GM12878 (cell line): ENCODE measurements at regions of chr2 and their contacts with region 1.

Region 1: GRCh38 chr2:172465417-172466334 is 38.3 kb downstream of the ITGA6 start:
- DNase-seq: no peak
- ATAC-seq: peak; percentile 65
- H3K4me3 ChIP-seq: no peak overlapping the region
- H3K27ac ChIP-seq: no peak overlapping the region
- H3K4me1 ChIP-seq: peaks cover 8% of the 10 kb centered on the region
- H3K27me3 ChIP-seq: peaks cover 0 to 5% of the 10 kb centered on the region in 2 experiments; a peak in 3 of 4 replicates
- CTCF ChIP-seq: peak; percentile 76 to 79 (median 76)
- EP300 ChIP-seq: no peak
- POLR2A ChIP-seq: no peak
- RAD21 ChIP-seq: peak; percentile 86

Region 2: DNA sequence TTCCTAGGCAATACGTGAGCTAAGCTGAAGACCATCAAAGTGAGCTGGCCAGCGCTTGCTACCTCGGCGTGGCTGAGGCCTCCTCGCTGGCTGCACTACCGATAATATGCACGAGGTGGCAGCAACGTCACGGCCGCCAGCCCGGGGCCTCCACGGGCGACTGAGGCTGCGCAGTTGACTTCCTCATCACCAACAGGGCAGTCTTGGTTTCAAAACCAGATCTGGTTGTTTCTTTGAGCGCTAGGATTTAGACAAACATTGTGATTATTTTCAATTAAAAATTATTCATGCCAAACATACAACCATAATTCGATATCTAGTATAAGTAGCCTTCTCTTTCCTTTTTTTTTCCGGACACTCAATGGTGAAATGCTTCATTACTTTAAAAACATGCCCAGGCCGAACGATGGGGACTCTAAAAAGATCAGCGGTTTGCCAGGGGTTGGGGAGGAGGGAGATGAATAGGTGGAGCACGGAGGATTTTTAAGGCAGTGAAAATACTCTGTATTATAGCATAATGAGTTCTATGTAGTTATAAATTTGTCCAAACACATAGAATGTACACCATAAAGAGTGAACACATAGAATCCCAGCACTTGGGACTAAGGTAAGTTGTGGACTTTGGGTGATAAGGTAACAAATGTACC is 891.4 kb before region 1 on chr2:
- CTCF ChIA-PET with region 1: interaction called, 11 read pairs
- POLR2A ChIA-PET with region 1: no interaction called
- RAD21 ChIA-PET with region 1: interaction called, 7 read pairs
- SMC1A ChIA-PET with region 1: interaction called, 4 read pairs
- in situ Hi-C with region 1: no loop called
- intact Hi-C with region 1: no loop called
- DNase-seq: peak; percentile 32
- ATAC-seq: peak; percentile 100
- H3K4me3 ChIP-seq: no peak overlapping the region
- H3K27ac ChIP-seq: no peak overlapping the region
- H3K4me1 ChIP-seq: no peaks in the 10 kb centered on the region
- H3K27me3 ChIP-seq: peaks cover 0 to 1% of the 10 kb centered on the region in 2 experiments; a peak in 1 of 4 replicates
- CTCF ChIP-seq: peak; percentile 94 to 97 (median 95); a peak in 5 of 6 replicates
- EP300 ChIP-seq: no peak
- POLR2A ChIP-seq: no peak
- RAD21 ChIP-seq: peak; percentile 81

Region 3: GRCh38 chr2:172131713-172132555 is 333.7 kb before region 1 on chr2:
- CTCF ChIA-PET with region 1: interaction called, 23 read pairs
- POLR2A ChIA-PET with region 1: no interaction called
- RAD21 ChIA-PET with region 1: interaction called, 4 read pairs
- SMC1A ChIA-PET with region 1: interaction called, 3 read pairs
- in situ Hi-C with region 1: no loop called
- intact Hi-C with region 1: loop called (anchors 5 kb)
- DNase-seq: no peak
- ATAC-seq: no peak
- H3K4me3 ChIP-seq: no peak overlapping the region
- H3K27ac ChIP-seq: no peak overlapping the region
- H3K4me1 ChIP-seq: no peaks in the 10 kb centered on the region
- H3K27me3 ChIP-seq: peaks cover 0 to 2% of the 10 kb centered on the region in 2 experiments; a peak in 2 of 4 replicates
- CTCF ChIP-seq: no peak
- EP300 ChIP-seq: no peak
- POLR2A ChIP-seq: no peak
- RAD21 ChIP-seq: no peak

Region 4: GRCh38 chr2:172200495-172201085 is 265.1 kb before region 1 on chr2:
- CTCF ChIA-PET with region 1: interaction called, 3 read pairs
- POLR2A ChIA-PET with region 1: no interaction called
- RAD21 ChIA-PET with region 1: no interaction called
- SMC1A ChIA-PET with region 1: no interaction called
- in situ Hi-C with region 1: no loop called
- intact Hi-C with region 1: loop called (anchors 1 kb)
- DNase-seq: no peak
- ATAC-seq: no peak
- H3K4me3 ChIP-seq: no peak overlapping the region
- H3K27ac ChIP-seq: no peak overlapping the region
- H3K4me1 ChIP-seq: no peaks in the 10 kb centered on the region
- H3K27me3 ChIP-seq: no peaks in the 10 kb centered on the region
- CTCF ChIP-seq: peak in 2 of 3 experiments; percentile 17 to 29; a peak in 2 of 6 replicates
- EP300 ChIP-seq: no peak
- POLR2A ChIP-seq: no peak
- RAD21 ChIP-seq: no peak

Region 5: DNA sequence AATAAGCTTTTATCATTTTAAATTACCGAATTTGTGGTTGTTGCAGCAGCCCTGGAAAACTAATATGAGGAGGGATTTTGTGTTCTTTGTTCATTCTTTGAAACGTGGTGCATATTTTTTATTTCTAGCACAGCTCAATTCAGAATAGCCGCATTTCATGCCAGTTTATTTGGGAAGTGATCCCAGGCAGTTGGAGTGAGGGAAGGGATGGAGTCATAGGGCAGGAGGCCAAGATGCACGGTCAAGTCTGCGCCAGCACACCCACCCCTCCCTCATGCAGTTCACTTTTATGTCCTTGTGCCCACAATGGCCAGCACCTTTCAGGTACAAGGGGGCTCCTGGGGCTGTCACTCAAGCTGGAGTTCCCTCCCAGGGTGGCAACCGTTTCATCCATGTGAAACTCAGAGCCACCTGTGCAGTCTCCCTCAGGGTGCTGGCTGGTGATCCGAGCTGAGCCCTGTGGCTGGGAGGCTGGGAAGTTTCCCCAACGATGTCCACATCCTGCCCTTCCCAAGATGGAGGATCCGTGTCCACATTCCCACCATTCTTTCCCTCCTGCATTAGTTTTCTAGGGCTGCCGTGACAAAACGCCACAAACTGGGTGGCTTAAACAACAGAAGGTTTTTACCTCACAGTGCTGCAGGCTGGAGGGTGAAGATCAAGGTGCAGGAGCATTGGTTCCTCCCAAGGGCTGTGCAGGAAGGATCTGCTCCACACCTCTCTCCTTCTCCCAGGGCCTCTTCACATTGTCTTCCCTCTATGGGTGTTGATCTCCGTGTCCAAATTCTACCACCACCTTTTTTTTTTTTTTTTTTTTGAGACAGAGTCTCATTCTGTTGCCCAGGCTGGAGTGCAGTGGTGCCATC is 106.8 kb before region 1 on chr2:
- CTCF ChIA-PET with region 1: no interaction called
- POLR2A ChIA-PET with region 1: no interaction called
- RAD21 ChIA-PET with region 1: no interaction called
- SMC1A ChIA-PET with region 1: no interaction called
- in situ Hi-C with region 1: no loop called
- intact Hi-C with region 1: no loop called
- DNase-seq: no peak
- ATAC-seq: no peak
- H3K4me3 ChIP-seq: no peak overlapping the region
- H3K27ac ChIP-seq: no peak overlapping the region
- H3K4me1 ChIP-seq: no peaks in the 10 kb centered on the region
- H3K27me3 ChIP-seq: no peaks in the 10 kb centered on the region; a peak in 1 of 4 replicates
- CTCF ChIP-seq: no peak
- EP300 ChIP-seq: no peak
- POLR2A ChIP-seq: no peak
- RAD21 ChIP-seq: no peak

Region 6: GRCh38 chr2:172484253-172484652 is 18.6 kb after region 1 on chr2:
- CTCF ChIA-PET with region 1: interaction called, 18 read pairs
- POLR2A ChIA-PET with region 1: no interaction called
- RAD21 ChIA-PET with region 1: interaction called, 3 read pairs
- SMC1A ChIA-PET with region 1: interaction called, 3 read pairs
- in situ Hi-C with region 1: no loop called
- intact Hi-C with region 1: no loop called
- DNase-seq: no peak
- ATAC-seq: no peak
- H3K4me3 ChIP-seq: no peak overlapping the region
- H3K27ac ChIP-seq: no peak overlapping the region
- H3K4me1 ChIP-seq: no peaks in the 10 kb centered on the region
- H3K27me3 ChIP-seq: no peaks in the 10 kb centered on the region
- CTCF ChIP-seq: peak in 2 of 3 experiments; percentile 28 to 39; a peak in 4 of 6 replicates
- EP300 ChIP-seq: no peak
- POLR2A ChIP-seq: no peak
- RAD21 ChIP-seq: peak; percentile 25